Colonic mucosa (tissue), 4 donors: ENCODE measurements at regions of chr2 and their contacts with region 1.

Region 1: GRCh38 chr2:232438951-232439757 is 16.8 kb upstream of the ALPI start:
- DNase-seq: no peak
- H3K4me3 ChIP-seq: no peak overlapping the region
- H3K27ac ChIP-seq: no peak overlapping the region
- H3K4me1 ChIP-seq: no peaks in the 10 kb centered on the region
- H3K27me3 ChIP-seq: no peaks in the 10 kb centered on the region
- CTCF ChIP-seq: peak; percentile 68

Region 2: GRCh38 chr2:231905026-231905425 is 534.1 kb before region 1 on chr2:
- intact Hi-C with region 1: loop called (anchors 5 kb)
- DNase-seq: no peak
- H3K4me3 ChIP-seq: no peak overlapping the region
- H3K27ac ChIP-seq: no peak overlapping the region
- H3K4me1 ChIP-seq: no peaks in the 10 kb centered on the region
- H3K27me3 ChIP-seq: no peaks in the 10 kb centered on the region
- CTCF ChIP-seq: no peak

Region 3: DNA sequence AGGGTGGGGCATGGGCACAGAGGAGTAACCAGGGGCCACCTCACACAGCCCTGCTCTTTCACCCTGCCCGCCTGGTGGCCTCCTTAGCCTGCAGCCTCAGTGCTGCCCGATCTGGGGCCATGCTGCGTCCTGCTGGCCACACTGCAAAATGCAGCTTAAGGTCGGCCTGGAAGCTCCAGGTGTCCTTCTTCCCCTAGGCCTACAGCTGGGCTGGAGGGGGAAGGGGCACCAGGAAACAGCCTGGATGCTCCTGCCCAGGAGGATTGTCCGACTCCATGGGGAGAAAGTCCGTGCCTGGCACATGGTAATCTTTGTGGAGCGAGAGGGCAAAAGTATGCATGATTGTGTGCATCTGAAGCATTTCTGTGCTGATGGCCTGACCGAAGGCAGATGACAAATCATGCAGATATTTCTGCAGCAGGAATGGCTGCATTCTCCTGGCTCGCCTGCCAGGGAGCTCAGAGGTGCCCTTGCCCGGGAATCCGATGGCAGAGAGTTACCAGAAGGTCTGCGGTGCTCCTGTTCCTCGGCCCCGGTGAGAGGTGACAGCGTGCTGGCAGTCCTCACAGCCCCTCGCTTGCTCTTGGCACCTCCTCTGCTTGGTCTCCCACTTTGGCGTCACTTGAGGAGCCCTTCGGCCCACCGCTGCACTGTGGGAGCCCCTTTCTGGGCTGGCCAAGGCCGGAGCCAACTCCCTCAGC is 73.4 kb before region 1 on chr2:
- intact Hi-C with region 1: loop called (anchors 5 kb)
- DNase-seq: no peak
- H3K4me3 ChIP-seq: no peak overlapping the region
- H3K27ac ChIP-seq: no peak overlapping the region
- H3K4me1 ChIP-seq: no peaks in the 10 kb centered on the region
- H3K27me3 ChIP-seq: no peaks in the 10 kb centered on the region
- CTCF ChIP-seq: peak; percentile 26

Region 4: DNA sequence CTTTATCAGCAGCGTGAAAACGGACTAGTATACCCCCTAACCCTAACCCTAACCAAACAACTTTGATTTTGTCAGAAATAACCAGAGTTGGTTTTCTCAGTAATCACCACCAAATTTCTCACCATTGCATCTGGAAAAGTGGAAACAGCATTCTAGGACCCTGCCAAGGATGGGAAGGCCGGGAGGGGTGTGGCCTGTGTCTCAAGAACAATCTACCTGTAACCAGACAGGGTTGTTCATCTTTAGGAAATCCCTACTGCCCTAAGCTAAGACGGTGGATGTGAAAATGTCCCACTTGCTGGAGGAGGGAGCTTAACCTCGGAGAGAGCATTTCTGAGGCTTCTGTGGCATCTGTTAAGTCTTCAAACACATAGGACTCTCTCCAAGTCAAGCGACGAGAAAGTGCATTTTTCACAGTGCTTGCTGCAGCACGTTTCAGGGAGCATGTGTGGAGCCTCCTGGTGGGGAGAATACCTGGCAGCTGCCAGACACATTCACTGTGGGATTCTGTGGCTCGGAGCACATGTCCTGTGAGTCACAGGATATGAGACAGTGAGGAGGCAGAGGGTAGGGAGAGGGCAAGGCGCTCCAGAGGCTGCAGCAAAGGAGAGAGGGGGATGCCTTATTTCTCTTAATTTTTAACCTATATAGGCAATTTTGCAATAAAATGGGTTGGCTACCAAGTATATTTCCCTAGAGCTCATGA is 1818.9 kb after region 1 on chr2:
- intact Hi-C with region 1: no loop called
- DNase-seq: peak; percentile 37
- H3K4me3 ChIP-seq: no peak overlapping the region
- H3K27ac ChIP-seq: no peak overlapping the region
- H3K4me1 ChIP-seq: no peaks in the 10 kb centered on the region
- H3K27me3 ChIP-seq: no peaks in the 10 kb centered on the region
- CTCF ChIP-seq: peak; percentile 27